ENCODE measurements at regions of chr14 and their contacts with region 1.

Region 1: GRCh38 chr14:75258615-75259466 is 19.8 kb upstream of the FOS start:
- DNase-seq: peak; percentile 99 to 100
- ATAC-seq: peak; percentile 95 to 98 (median 97)
- H3K4me3 ChIP-seq: peak overlapping the region in 9 of 10 donors; percentile 20 to 55 (median 47)
- H3K27ac ChIP-seq: peak overlapping the region; percentile 79 to 98 (median 95)
- H3K4me1 ChIP-seq: peaks cover 6 to 43% (median 33%) of the 10 kb centered on the region in 9 donors
- H3K27me3 ChIP-seq: no peaks in the 10 kb centered on the region
- CTCF ChIP-seq: no peak

Region 2: GRCh38 chr14:75141967-75142366 is 116.9 kb before region 1 on chr14:
- intact Hi-C with region 1: loop called in 1 of 10 experiments (anchors 5 kb)
- DNase-seq: no peak
- ATAC-seq: peak in 1 of 8 donors; percentile 53
- H3K4me3 ChIP-seq: no peak overlapping the region
- H3K27ac ChIP-seq: peak overlapping the region in 3 of 10 donors; percentile 3 to 56 (median 5)
- H3K4me1 ChIP-seq: peaks cover 2 to 90% (median 54%) of the 10 kb centered on the region in 9 donors
- H3K27me3 ChIP-seq: no peaks in the 10 kb centered on the region
- CTCF ChIP-seq: peak in 8 of 9 donors; percentile 5 to 58 (median 48)

Region 3: GRCh38 chr14:75238756-75239455 is 19.9 kb before region 1 on chr14:
- intact Hi-C with region 1: loop called in 2 of 10 experiments (anchors 2 kb)
- DNase-seq: peak in 1 of 2 donors; percentile 37
- ATAC-seq: peak in 2 of 8 donors; percentile 13 to 22
- H3K4me3 ChIP-seq: no peak overlapping the region
- H3K27ac ChIP-seq: peak overlapping the region; percentile 77 to 96 (median 86)
- H3K4me1 ChIP-seq: peaks cover 9 to 63% (median 34%) of the 10 kb centered on the region in 9 donors
- H3K27me3 ChIP-seq: no peaks in the 10 kb centered on the region
- CTCF ChIP-seq: peak in 4 of 9 donors; percentile 11 to 49 (median 42)

Measured in heart right ventricle (tissue), 16 donors.